ENCODE measurements at regions of chr9 and their contacts with region 1.

Region 1: GRCh38 chr9:76873056-76873792 is 32.7 kb downstream of the PRUNE2 start:
- DNase-seq: no peak
- H3K4me3 ChIP-seq: no peak overlapping the region
- H3K27ac ChIP-seq: peak overlapping the region; percentile 40 to 49
- H3K4me1 ChIP-seq: peaks cover 2% of the 10 kb centered on the region
- H3K27me3 ChIP-seq: no peaks in the 10 kb centered on the region
- CTCF ChIP-seq: no peak
- POLR2A ChIP-seq: no peak

Region 2: GRCh38 chr9:76835571-76836283 is 37.5 kb before region 1 on chr9:
- intact Hi-C with region 1: loop called (anchors 5 kb)
- DNase-seq: no peak
- H3K4me3 ChIP-seq: no peak overlapping the region
- H3K27ac ChIP-seq: peak overlapping the region; percentile 58 to 60
- H3K4me1 ChIP-seq: no peaks in the 10 kb centered on the region
- H3K27me3 ChIP-seq: no peaks in the 10 kb centered on the region
- CTCF ChIP-seq: no peak
- POLR2A ChIP-seq: no peak